ENCODE measurements at regions of chr9 and their contacts with region 1.

Region 1: DNA sequence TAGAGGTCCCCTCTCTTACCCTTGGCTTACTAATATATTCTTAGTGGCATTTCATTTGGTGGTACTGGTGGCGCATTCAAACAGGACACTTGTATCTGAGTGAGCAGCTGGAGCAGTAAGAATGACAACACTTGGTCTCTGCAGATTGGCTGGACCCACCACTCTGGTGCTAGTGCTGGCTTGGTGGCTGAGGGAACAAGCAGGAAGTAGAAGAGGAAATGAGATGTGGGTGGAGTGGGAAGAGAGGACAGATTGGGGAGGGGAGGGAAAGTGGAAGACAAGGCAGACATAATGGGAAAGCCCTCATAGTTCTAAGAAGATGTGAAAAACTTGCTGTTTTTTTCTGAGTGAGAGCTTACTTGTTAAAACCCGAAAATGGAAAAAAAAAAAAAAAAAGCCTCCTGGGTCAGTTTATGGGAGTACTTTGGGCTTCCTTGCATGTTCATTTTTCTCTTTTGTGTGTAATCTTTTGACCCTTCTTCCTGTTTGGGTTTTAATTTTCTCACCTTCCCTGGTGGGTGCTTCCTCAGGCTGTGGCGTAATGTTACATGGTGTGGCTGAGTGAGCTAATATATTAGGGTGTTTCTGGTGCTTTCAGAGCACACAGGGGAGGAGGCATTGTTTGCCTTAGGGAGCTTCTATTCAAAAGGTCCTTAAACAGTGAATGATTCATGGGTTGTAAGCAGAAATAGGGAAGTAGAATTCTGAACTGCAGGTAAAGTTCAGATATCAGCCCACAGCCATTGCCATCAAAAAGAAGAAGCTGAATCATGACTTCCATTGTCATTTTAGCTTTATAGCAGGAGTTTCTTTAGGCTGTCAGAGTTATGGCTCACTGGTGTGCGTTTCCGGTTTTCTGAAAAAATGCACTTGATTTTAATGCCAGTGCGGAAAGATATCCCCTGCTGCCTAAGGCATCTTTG is 52.3 kb downstream of the TLE4 start:
- DNase-seq: peak; percentile 38 to 67 (median 50)
- H3K4me3 ChIP-seq: no peak overlapping the region
- H3K4me3 Mint-ChIP-seq: peak overlapping the region in 7 of 8 donors; percentile 43 to 83 (median 73)
- H3K27ac ChIP-seq: peak overlapping the region; percentile 1
- H3K27ac Mint-ChIP-seq: peak overlapping the region; percentile 80 to 94 (median 88)
- H3K4me1 ChIP-seq: peaks cover 27% of the 10 kb centered on the region
- H3K4me1 Mint-ChIP-seq: peaks cover 37 to 75% (median 53%) of the 10 kb centered on the region in 4 donors
- H3K27me3 ChIP-seq: no peaks in the 10 kb centered on the region
- H3K27me3 Mint-ChIP-seq: no peaks in the 10 kb centered on the region

Region 2: GRCh38 chr9:79583952-79584654 is 40.0 kb before region 1 on chr9:
- CTCF ChIA-PET with region 1: no interaction called
- POLR2A ChIA-PET with region 1: interaction called, 14 read pairs
- intact Hi-C with region 1: no loop called
- DNase-seq: peak; percentile 16 to 42 (median 24)
- H3K4me3 ChIP-seq: no peak overlapping the region
- H3K4me3 Mint-ChIP-seq: peak overlapping the region in 7 of 8 donors; percentile 53 to 78 (median 67)
- H3K27ac ChIP-seq: no peak overlapping the region
- H3K27ac Mint-ChIP-seq: peak overlapping the region; percentile 20 to 93 (median 81)
- H3K4me1 ChIP-seq: peaks cover 62% of the 10 kb centered on the region
- H3K4me1 Mint-ChIP-seq: peaks cover 62 to 79% (median 71%) of the 10 kb centered on the region in 4 donors
- H3K27me3 ChIP-seq: no peaks in the 10 kb centered on the region
- H3K27me3 Mint-ChIP-seq: no peaks in the 10 kb centered on the region

Region 3: DNA sequence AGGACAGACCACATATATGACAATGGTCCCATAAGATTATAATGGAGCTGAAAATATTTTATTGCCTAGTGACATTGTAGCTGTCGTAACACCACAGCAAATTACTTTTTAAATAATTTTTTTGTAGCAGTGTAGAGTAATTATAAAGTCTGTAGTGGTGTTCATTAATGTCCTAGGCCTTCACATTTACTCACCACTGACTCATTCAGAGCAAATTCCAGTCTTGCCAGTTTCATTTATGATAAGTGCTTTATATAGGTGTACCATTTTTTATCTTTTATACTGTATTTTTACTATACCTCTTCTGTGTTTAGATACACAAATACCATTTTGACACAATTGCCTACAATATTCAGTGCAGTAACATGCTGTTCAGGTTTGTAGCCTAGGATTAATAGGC is 15.3 kb after region 1 on chr9:
- CTCF ChIA-PET with region 1: interaction called, 7 read pairs
- POLR2A ChIA-PET with region 1: interaction called, 10 read pairs
- intact Hi-C with region 1: no loop called
- DNase-seq: no peak
- H3K4me3 ChIP-seq: no peak overlapping the region
- H3K4me3 Mint-ChIP-seq: peak overlapping the region in 3 of 8 donors; percentile 36 to 73 (median 64)
- H3K27ac ChIP-seq: no peak overlapping the region
- H3K27ac Mint-ChIP-seq: peak overlapping the region in 1 of 7 donors; percentile 54
- H3K4me1 ChIP-seq: peaks cover 45% of the 10 kb centered on the region
- H3K4me1 Mint-ChIP-seq: peaks cover 45 to 85% (median 62%) of the 10 kb centered on the region in 4 donors
- H3K27me3 ChIP-seq: no peaks in the 10 kb centered on the region
- H3K27me3 Mint-ChIP-seq: no peaks in the 10 kb centered on the region

Measured in CD4-positive, alpha-beta memory T cell (primary cell).